BJ (cell line): ENCODE measurements at regions of chr16 and their contacts with region 1.

Region 1: DNA sequence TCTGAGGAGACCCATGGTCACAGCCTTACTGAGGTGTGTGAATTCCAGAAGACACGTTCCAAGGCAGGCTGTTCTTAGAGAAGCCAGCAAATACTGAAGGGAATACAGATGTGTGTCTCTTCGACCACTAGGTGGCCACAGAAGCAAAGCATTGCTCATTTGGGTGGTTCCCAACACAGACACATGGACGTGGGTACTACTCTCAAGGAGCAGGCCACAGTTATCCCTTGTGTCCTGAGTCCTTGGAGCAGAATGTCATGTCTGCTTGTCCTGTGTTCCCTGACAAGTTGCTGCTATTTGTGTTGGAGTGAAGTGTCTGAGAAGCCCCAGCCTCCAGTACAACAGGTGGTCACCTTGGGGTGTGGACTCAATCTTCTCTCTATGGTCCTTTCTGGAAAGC is 30.3 kb downstream of the HMOX2 start:
- DNase-seq: no peak
- H3K4me3 ChIP-seq: no peak overlapping the region
- H3K27me3 ChIP-seq: no peaks in the 10 kb centered on the region
- CTCF ChIP-seq: peak; percentile 86

Region 2: DNA sequence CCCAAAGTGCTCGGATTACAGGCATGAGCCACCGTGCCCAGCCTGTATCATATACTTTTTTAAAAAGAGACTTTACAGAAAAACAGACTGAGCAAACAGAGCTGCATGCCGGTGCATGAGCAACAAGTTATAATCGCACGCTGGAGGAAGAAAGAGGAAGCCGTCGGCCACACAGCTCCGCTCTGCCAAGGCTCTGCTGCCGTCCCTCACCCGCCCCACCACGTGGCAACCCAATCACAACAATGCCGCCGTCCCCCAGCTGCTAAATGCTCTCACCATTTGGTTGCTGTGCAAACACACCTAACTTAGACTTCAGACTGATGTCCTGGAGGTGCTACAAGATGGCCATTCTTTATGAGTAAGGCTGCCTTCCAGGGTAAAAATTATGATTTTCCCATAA is 473.7 kb before region 1 on chr16:
- CTCF ChIA-PET with region 1: no interaction called
- POLR2A ChIA-PET with region 1: no interaction called
- DNase-seq: no peak
- H3K4me3 ChIP-seq: no peak overlapping the region
- H3K27me3 ChIP-seq: no peaks in the 10 kb centered on the region
- CTCF ChIP-seq: no peak

Region 3: GRCh38 chr16:4475880-4476788 is 30.3 kb before region 1 on chr16 and contains the start of gene HMOX2:
- CTCF ChIA-PET with region 1: interaction called, 23 read pairs
- POLR2A ChIA-PET with region 1: no interaction called
- DNase-seq: no peak
- H3K4me3 ChIP-seq: peak within 1 kb of the TSS; percentile 78
- H3K27me3 ChIP-seq: no peaks in the 10 kb centered on the region
- CTCF ChIP-seq: peak; percentile 44
- polyA plus RNA-seq, gene HMOX2: 43.5 and 59.5 TPM in 2 replicates

Region 4: GRCh38 chr16:4517812-4518680 is 11.6 kb after region 1 on chr16:
- CTCF ChIA-PET with region 1: interaction called, 52 read pairs
- POLR2A ChIA-PET with region 1: no interaction called
- DNase-seq: no peak
- H3K4me3 ChIP-seq: no peak overlapping the region
- H3K27me3 ChIP-seq: no peaks in the 10 kb centered on the region
- CTCF ChIP-seq: peak; percentile 63

Region 5: GRCh38 chr16:4525067-4525466 is 18.6 kb after region 1 on chr16:
- CTCF ChIA-PET with region 1: interaction called, 15 read pairs
- POLR2A ChIA-PET with region 1: no interaction called
- DNase-seq: no peak
- H3K4me3 ChIP-seq: no peak overlapping the region
- H3K27me3 ChIP-seq: no peaks in the 10 kb centered on the region
- CTCF ChIP-seq: no peak

Region 6: GRCh38 chr16:4544473-4544872 is 38.0 kb after region 1 on chr16:
- CTCF ChIA-PET with region 1: interaction called, 110 read pairs
- POLR2A ChIA-PET with region 1: no interaction called
- DNase-seq: no peak
- H3K4me3 ChIP-seq: no peak overlapping the region
- H3K27me3 ChIP-seq: no peaks in the 10 kb centered on the region
- CTCF ChIP-seq: no peak

Region 7: DNA sequence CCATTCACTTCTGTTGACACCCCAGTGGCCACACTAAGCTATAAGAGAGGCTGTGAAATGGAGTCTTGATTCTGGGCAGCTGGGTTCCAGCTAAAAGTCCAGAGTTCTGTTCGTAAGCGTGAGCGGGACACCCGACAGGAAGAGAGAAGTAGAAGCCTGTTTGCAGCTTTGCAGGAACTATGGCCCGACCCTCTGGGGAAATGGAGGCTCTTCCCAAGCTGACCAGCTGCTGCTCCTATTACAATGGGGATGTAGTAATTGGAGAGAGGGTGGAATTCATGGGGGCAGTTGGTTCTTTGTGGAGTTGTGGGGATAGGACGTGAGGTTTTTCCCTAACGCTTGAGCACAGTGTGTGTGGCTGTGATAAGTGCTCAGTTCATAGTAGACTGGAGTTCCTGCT is 79.8 kb after region 1 on chr16:
- CTCF ChIA-PET with region 1: interaction called, 23 read pairs
- POLR2A ChIA-PET with region 1: no interaction called
- DNase-seq: no peak
- H3K4me3 ChIP-seq: no peak overlapping the region
- H3K27me3 ChIP-seq: peaks cover 1% of the 10 kb centered on the region; the same call in 1 of the 2 replicates
- CTCF ChIP-seq: no peak

Region 8: DNA sequence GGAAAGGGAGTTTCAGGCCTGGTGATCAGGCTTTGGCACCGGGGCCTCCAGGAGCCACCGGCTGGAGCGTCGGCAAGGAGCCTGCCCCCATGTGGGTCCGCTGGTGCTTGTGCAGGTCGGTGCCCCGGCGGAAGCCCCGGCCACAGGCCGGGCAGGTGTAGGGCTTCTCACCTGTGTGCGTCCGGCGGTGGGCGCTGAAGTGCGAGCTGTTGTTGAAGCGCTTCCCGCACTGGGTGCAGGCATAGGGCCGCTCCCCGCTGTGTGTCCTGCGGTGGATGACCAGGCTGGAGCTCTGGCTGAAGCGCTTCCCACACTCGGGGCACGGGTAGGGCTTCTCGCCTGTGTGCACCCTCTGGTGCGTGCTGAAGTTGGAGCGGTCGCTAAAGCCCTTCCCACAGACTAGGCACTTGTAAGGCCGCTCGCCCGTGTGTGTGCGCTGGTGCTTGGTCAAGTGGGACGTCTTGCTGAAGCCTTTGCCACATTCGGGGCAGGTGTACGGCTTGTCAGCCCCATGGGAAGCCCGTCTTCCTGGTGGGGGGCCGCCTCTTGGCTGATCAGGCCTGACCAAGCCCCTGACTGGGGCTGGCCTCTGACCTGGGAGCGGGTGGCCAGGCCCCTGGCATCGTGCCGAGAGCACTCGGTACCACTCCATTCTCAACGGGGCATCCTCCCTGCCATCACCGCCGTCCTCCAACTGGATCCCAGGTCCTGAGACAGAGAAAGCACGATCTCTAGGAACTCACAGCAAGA is 246.1 kb after region 1 on chr16:
- CTCF ChIA-PET with region 1: no interaction called
- POLR2A ChIA-PET with region 1: no interaction called
- DNase-seq: no peak
- H3K4me3 ChIP-seq: no peak overlapping the region
- H3K27me3 ChIP-seq: no peaks in the 10 kb centered on the region
- CTCF ChIP-seq: no peak